BJ (cell line): ENCODE measurements at regions of chr19 and their contacts with region 1.

Region 1: DNA sequence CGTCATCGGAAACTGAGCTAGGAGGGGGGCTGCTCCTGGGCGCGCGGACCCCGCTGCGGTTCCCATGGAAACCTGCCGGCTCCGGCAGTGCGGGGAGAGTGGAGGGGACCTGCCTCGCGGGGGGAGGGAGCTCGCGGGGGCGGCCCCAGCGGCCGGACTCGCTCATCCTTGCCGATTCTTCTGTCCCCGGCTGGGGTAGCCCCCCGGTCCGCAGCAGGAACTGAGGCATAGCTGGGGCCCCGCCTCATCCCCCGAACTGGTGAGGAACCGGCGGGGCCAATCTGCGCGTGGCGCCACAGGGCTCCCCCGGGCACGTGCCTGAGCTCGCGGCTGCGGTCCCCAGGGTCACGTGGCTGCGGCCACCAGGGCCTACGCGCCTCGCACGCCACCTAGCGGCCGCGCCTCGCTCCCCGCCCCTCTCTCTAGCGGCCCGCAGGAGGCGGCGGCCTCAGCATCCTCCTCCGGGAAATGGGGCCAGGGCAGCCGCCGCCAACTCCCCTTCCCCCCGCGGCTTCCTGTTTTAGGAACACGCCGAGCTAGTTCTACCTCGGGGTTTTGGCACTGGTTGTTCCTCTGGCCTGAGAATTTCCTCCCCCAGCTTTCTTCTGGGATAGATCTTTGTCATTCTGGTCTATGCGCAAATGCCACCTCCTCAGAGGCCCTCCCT is 1.7 kb upstream of the ELAVL3 start:
- DNase-seq: no peak
- H3K4me3 ChIP-seq: peak overlapping the region; percentile 50
- H3K27me3 ChIP-seq: peaks cover 16% of the 10 kb centered on the region
- CTCF ChIP-seq: peak; percentile 74

Region 2: DNA sequence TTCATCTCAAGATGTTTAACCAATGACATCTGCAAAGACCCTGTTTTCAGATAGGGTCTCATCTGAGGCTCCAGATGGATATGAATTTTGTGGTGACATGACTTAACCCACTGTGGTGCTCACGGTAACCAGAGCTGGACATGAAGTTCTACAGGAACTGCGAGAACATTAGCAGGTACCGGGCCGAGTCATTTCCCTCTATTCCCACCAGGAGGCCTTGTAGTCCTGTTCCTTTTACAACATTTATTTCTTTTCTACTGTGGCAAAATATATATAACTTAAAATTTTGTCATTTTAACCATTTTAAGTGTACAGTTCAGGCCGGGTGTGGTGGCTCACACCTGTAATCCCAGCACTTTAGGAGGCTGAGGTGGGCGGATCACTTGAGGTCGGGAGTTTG is 194.2 kb before region 1 on chr19:
- CTCF ChIA-PET with region 1: interaction called, 28 read pairs
- POLR2A ChIA-PET with region 1: no interaction called
- DNase-seq: no peak
- H3K4me3 ChIP-seq: no peak overlapping the region
- H3K27me3 ChIP-seq: no peaks in the 10 kb centered on the region
- CTCF ChIP-seq: peak; percentile 61

Region 3: DNA sequence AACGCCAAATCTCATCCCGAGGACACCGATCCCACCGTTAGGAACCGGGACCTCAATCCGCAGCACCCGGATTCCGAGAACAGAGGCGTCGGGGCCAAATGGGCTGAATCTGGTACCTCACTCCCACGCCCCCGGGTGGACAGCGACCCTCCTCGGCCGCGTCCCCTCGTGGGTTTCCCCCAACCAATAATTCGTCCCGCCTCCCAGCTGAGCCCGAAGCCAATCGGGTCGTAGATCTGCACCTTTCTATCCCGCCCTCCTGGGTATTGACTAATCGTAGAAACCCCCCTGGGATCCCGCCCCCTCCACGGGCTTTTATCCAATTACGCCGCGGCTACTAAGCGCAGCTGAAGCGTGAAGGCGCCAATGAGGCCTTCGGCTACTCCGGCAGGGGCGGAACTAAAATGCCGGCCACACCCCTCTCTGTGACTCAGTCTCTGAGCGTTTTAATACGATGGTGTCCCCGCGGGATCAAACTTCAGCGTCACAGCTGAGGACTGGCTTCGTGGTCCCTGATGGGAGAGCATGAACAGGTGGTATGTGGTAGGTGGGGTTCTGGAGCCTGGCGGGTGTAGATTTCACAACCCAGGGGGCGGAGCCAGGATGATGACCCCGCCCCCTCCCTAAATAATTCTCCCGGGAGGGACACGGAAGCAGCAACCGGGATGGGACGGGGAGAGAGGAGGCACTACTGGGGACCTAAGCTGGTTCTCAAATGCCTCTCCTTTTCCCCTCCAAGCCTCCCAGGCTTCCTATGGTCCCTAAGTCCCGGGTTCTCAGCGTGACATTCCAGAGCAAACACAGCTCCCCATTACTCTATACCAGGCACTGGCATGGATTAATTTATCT is 136.2 kb before region 1 on chr19 and contains the starts of genes CCDC159 and TMEM205:
- CTCF ChIA-PET with region 1: interaction called, 11 read pairs
- POLR2A ChIA-PET with region 1: no interaction called
- DNase-seq: peak; percentile 96
- H3K4me3 ChIP-seq: peak within 1 kb of the TSS; percentile 69
- H3K27me3 ChIP-seq: no peaks in the 10 kb centered on the region
- CTCF ChIP-seq: no peak; the same call in 1 of the 2 replicates
- polyA plus RNA-seq, gene CCDC159: 16.3 and 21.4 TPM in 2 replicates
- polyA plus RNA-seq, gene TMEM205: 89.8 and 107 TPM in 2 replicates

Region 4: GRCh38 chr19:11380653-11381534 is 101.6 kb before region 1 on chr19:
- CTCF ChIA-PET with region 1: interaction called, 21 read pairs
- POLR2A ChIA-PET with region 1: no interaction called
- DNase-seq: peak; percentile 66
- H3K4me3 ChIP-seq: peak overlapping the region; percentile 75
- H3K27me3 ChIP-seq: no peaks in the 10 kb centered on the region
- CTCF ChIP-seq: peak; percentile 83

Region 5: DNA sequence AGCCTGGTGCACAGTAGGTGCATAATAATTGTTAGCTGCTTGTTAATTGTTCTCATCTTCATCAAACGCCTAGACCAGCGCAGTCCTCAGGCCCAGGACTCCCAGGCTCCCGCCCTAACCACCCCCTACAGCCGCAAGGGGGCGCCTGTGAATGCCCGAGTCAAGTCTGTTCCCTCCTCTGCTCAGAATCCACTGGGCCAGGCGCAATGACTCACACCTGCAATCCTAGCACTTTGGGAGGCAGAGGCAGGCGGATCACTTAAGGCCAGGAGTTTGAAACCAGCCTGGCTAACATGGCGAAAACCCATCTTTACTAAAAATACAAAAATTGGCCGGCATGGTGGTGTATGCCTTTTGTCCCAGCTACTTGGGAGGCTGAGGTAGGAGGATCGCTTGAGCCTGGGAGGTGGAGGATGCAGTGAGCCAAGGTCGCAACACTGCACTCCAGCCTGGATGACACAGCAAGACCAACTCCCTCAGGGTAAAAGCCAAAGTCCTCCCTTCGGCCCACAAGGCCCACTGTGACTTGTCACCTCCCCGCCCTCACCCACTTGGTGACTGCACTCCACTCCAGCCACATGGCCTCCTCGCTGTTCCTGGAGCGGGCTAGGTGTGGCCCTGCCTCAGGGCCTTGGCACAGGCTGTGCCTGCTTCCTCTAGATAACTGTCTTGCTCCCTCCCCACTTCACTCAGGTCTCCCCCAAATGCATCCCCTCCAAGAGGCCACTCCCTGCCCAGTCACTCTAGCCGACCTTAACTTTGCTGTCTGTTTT is 14.1 kb after region 1 on chr19:
- CTCF ChIA-PET with region 1: interaction called, 22 read pairs
- POLR2A ChIA-PET with region 1: no interaction called
- DNase-seq: peak; percentile 24
- H3K4me3 ChIP-seq: no peak overlapping the region
- H3K27me3 ChIP-seq: no peaks in the 10 kb centered on the region
- CTCF ChIP-seq: peak; percentile 84